SK-N-SH (cell line): ENCODE measurements at regions of chr4 and their contacts with region 1.

Region 1: DNA sequence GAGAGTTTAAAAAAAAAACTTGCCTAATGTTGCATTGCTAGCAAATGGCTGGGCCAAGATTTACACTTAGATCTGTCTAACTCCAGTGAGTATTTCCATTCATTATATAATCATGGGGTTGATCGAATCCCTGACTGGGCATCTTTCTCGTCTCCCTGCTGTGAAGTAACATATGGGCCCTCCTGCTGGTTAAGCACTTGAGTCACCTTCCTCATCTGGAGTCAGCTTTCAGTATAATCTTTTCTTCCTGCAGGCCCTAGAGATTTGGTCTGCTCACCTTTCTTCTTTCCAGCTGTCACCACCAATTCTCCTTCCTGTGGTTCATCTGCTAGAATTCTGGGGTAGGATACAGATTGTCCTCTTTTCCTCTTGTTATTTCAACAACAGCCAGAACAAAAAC is 41.6 kb downstream of the TIGD2 start:
- DNase-seq: no peak
- H3K4me3 ChIP-seq: no peak overlapping the region
- H3K27ac ChIP-seq: no peak overlapping the region
- H3K4me1 ChIP-seq: no peaks in the 10 kb centered on the region
- H3K27me3 ChIP-seq: no peaks in the 10 kb centered on the region
- CTCF ChIP-seq: no peak
- EP300 ChIP-seq: no peak
- RAD21 ChIP-seq: no peak

Region 2: DNA sequence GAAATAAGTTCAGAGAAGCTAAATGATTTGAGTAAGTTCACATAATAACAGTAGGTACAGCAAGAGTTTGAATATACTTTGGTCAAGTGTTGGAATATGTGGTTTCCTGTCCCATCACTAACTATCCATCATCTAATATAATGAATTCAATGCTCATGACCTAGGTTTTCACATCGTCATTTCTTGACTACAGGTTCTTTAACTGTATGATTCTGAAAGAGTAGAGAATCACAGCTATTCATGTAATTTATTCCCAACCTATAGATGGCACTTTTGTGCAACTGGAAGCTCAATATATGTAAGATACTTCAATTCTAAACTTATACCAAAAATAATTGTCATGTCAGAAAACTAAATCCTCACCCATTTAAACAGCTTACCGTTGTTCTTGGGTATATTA is 11.4 kb after region 1 on chr4:
- CTCF ChIA-PET with region 1: interaction called, 10 read pairs
- POLR2A ChIA-PET with region 1: no interaction called
- DNase-seq: no peak
- H3K4me3 ChIP-seq: no peak overlapping the region
- H3K27ac ChIP-seq: no peak overlapping the region
- H3K4me1 ChIP-seq: no peaks in the 10 kb centered on the region
- H3K27me3 ChIP-seq: no peaks in the 10 kb centered on the region
- CTCF ChIP-seq: peak; percentile 15; the same call in 1 of the 2 replicates
- EP300 ChIP-seq: no peak
- RAD21 ChIP-seq: no peak